ENCODE measurements at regions of chr10 and their contacts with region 1.

Region 1: DNA sequence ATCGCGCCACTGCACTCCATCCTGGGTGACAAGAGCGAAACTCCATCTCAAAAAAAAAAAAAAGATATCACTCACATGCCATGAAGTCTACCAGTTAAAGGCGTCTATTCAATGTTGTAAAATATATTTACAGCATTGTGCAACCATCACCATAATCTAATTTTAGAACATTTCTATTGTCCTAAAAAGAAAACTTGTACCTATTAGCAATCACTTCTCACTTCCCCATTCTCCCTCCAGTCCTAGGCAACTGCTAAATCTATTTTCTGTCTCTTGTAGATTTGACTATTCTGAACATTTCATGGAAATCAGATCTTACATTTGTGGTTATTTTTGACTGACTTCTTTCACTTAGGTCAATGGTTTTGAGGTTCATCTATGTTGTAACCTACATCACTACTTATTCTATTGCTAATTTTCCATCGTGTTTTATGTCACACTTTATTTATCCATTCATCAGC is 25.2 kb upstream of the OTUD1 start:
- DNase-seq: peak; percentile 56
- ATAC-seq: peak; percentile 62
- H3K4me3 ChIP-seq: no peak overlapping the region
- H3K4me3 Mint-ChIP-seq: peak overlapping the region; percentile 21
- H3K27ac ChIP-seq: no peak overlapping the region
- H3K27ac Mint-ChIP-seq: no peak overlapping the region
- H3K4me1 ChIP-seq: peaks cover 7 to 15% of the 10 kb centered on the region in 2 donors
- H3K4me1 Mint-ChIP-seq: peaks cover 24% of the 10 kb centered on the region
- H3K27me3 ChIP-seq: no peaks in the 10 kb centered on the region
- H3K27me3 Mint-ChIP-seq: no peaks in the 10 kb centered on the region
- CTCF ChIP-seq: no peak

Region 2: DNA sequence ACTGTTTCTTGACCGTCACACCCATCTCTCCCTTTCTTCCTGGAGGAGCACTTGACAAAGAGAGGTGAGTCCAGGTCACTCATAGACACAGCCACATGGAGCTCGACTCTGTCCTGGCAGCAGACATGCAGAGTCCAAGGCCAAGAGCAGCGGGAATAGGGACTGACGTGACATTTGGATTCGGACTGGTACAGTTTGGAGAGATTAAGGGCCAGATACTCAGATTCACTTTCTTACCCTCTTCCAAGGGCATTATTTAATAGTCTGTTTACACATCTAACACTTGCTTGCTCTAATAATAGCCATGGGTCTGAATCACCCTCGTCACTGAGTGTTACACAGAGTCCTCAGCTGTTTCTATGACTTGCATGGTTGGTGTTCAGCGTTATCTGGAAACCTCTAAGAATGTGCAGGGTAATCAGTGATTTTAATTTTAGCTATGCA is 13.9 kb before region 1 on chr10:
- CTCF ChIA-PET with region 1: no interaction called
- POLR2A ChIA-PET with region 1: no interaction called
- intact Hi-C with region 1: no loop called
- DNase-seq: no peak
- ATAC-seq: no peak
- H3K4me3 ChIP-seq: no peak overlapping the region
- H3K4me3 Mint-ChIP-seq: no peak overlapping the region
- H3K27ac ChIP-seq: no peak overlapping the region
- H3K27ac Mint-ChIP-seq: no peak overlapping the region
- H3K4me1 ChIP-seq: no peaks in the 10 kb centered on the region
- H3K4me1 Mint-ChIP-seq: no peaks in the 10 kb centered on the region
- H3K27me3 ChIP-seq: no peaks in the 10 kb centered on the region
- H3K27me3 Mint-ChIP-seq: no peaks in the 10 kb centered on the region
- CTCF ChIP-seq: no peak

Region 3: GRCh38 chr10:23461557-23461956 is 47.9 kb after region 1 on chr10:
- CTCF ChIA-PET with region 1: no interaction called
- POLR2A ChIA-PET with region 1: no interaction called
- intact Hi-C with region 1: loop called (anchors 10 kb)
- DNase-seq: no peak
- ATAC-seq: no peak
- H3K4me3 ChIP-seq: no peak overlapping the region
- H3K4me3 Mint-ChIP-seq: no peak overlapping the region
- H3K27ac ChIP-seq: no peak overlapping the region
- H3K27ac Mint-ChIP-seq: no peak overlapping the region
- H3K4me1 ChIP-seq: peaks cover 26 to 30% of the 10 kb centered on the region in 2 donors
- H3K4me1 Mint-ChIP-seq: peaks cover 34% of the 10 kb centered on the region
- H3K27me3 ChIP-seq: no peaks in the 10 kb centered on the region
- H3K27me3 Mint-ChIP-seq: no peaks in the 10 kb centered on the region
- CTCF ChIP-seq: no peak

Region 4: GRCh38 chr10:23850631-23851030 is 437.0 kb after region 1 on chr10:
- CTCF ChIA-PET with region 1: no interaction called
- POLR2A ChIA-PET with region 1: no interaction called
- intact Hi-C with region 1: no loop called
- DNase-seq: no peak
- ATAC-seq: no peak
- H3K4me3 ChIP-seq: no peak overlapping the region
- H3K4me3 Mint-ChIP-seq: no peak overlapping the region
- H3K27ac ChIP-seq: no peak overlapping the region
- H3K27ac Mint-ChIP-seq: no peak overlapping the region
- H3K4me1 ChIP-seq: no peaks in the 10 kb centered on the region
- H3K4me1 Mint-ChIP-seq: no peaks in the 10 kb centered on the region
- H3K27me3 ChIP-seq: no peaks in the 10 kb centered on the region
- H3K27me3 Mint-ChIP-seq: no peaks in the 10 kb centered on the region
- CTCF ChIP-seq: no peak

Measured in B cell (primary cell).